CD4-positive, alpha-beta memory T cell (primary cell): ENCODE measurements at regions of chr3 and their contacts with region 1.

Region 1: DNA sequence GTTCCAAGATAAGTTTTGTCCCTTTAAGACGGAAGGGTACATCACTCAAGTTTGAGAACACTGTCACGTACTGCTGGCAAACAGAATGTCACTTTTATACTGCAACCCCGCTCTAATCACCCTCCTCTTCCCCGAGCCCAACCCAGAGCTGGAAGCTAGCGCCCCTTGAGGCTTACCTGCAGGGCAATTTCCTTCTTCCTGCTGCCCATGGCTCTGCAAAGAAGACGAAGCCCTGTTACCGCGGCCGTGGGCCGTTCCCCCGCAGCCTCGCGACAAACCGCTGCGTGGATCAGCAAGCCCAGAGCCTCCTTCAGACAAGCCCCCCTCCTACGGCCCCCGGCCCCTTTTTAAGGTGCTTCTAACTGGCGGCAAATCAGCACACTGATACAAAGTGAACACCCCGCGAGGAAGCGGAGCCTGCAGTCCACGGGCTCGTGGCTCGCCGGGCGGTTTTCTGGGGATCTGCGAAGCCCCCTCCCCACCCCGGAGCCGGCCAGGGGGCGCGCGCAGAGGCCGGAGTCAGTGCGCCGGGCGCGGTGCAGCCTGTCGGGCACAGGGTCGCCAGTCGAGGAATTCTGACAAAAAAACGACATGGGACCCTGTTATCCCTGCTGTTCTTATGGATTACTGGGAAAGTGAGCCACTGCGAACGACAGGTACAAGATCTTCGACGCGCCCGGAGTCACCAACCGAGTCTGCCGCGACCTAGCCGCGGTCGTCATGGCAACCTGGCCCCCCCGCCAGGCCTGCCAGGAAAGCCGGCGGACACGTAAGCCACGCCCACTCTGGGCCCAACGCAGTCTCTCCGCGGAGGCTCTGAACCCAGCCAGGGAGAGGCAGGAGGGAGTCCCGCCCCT is at the start of gene NME9:
- DNase-seq: peak; percentile 85 to 90 (median 89)
- H3K4me3 ChIP-seq: peak within 1 kb of the TSS; percentile 49 to 68
- H3K4me3 Mint-ChIP-seq: peak within 1 kb of the TSS; percentile 95 to 99 (median 98)
- H3K27ac ChIP-seq: peak within 1 kb of the TSS; percentile 72
- H3K27ac Mint-ChIP-seq: peak within 1 kb of the TSS; percentile 81 to 99 (median 98)
- H3K4me1 ChIP-seq: peaks cover 10% of the 10 kb centered on the region
- H3K4me1 Mint-ChIP-seq: peaks cover 17 to 41% (median 25%) of the 10 kb centered on the region in 4 donors
- H3K27me3 ChIP-seq: no peaks in the 10 kb centered on the region
- H3K27me3 Mint-ChIP-seq: no peaks in the 10 kb centered on the region
- total RNA-seq, gene NME9: 1.0 to 1.4 TPM

Region 2: GRCh38 chr3:138118612-138119422 is 210.5 kb before region 1 on chr3:
- CTCF ChIA-PET with region 1: no interaction called
- POLR2A ChIA-PET with region 1: no interaction called
- intact Hi-C with region 1: loop called (anchors 5 kb)
- DNase-seq: peak in 4 of 5 donors; percentile 25 to 37 (median 29)
- H3K4me3 ChIP-seq: no peak overlapping the region
- H3K4me3 Mint-ChIP-seq: no peak overlapping the region
- H3K27ac ChIP-seq: no peak overlapping the region
- H3K27ac Mint-ChIP-seq: no peak overlapping the region
- H3K4me1 ChIP-seq: no peaks in the 10 kb centered on the region
- H3K4me1 Mint-ChIP-seq: peaks cover 0 to 8% (median 3%) of the 10 kb centered on the region in 4 donors
- H3K27me3 ChIP-seq: peaks cover 10% of the 10 kb centered on the region
- H3K27me3 Mint-ChIP-seq: peaks cover 14 to 34% of the 10 kb centered on the region in 2 donors

Region 3: GRCh38 chr3:138180375-138181029 is 148.9 kb before region 1 on chr3:
- CTCF ChIA-PET with region 1: interaction called, 11 read pairs
- POLR2A ChIA-PET with region 1: no interaction called
- intact Hi-C with region 1: no loop called
- DNase-seq: peak; percentile 29 to 44 (median 38)
- H3K4me3 ChIP-seq: no peak overlapping the region
- H3K4me3 Mint-ChIP-seq: no peak overlapping the region
- H3K27ac ChIP-seq: no peak overlapping the region
- H3K27ac Mint-ChIP-seq: no peak overlapping the region
- H3K4me1 ChIP-seq: no peaks in the 10 kb centered on the region
- H3K4me1 Mint-ChIP-seq: no peaks in the 10 kb centered on the region
- H3K27me3 ChIP-seq: no peaks in the 10 kb centered on the region
- H3K27me3 Mint-ChIP-seq: peaks cover 0 to 3% of the 10 kb centered on the region in 2 donors

Region 4: DNA sequence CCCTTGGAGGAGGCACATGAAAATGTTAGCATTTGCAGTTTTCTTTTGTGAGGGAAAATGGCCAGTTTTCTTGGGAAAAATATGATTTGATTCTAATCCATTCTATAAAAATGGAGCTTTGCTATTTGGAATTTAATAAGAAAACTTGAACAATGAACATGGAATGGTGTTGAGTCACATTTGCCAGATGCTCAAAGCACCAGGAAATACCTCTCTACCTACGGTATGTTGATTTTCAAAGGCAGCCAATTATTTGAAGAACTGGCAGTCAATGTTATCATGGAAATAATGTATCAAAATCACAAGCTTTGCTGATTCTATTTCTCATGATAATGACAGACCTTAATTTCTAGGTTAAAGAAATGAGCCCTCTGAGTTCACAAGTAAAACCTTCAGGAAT is 14.6 kb before region 1 on chr3:
- CTCF ChIA-PET with region 1: interaction called, 10 read pairs
- POLR2A ChIA-PET with region 1: no interaction called
- intact Hi-C with region 1: no loop called
- DNase-seq: no peak
- H3K4me3 ChIP-seq: no peak overlapping the region
- H3K4me3 Mint-ChIP-seq: no peak overlapping the region
- H3K27ac ChIP-seq: no peak overlapping the region
- H3K27ac Mint-ChIP-seq: no peak overlapping the region
- H3K4me1 ChIP-seq: no peaks in the 10 kb centered on the region
- H3K4me1 Mint-ChIP-seq: no peaks in the 10 kb centered on the region
- H3K27me3 ChIP-seq: no peaks in the 10 kb centered on the region
- H3K27me3 Mint-ChIP-seq: peaks cover 0 to 2% of the 10 kb centered on the region in 2 donors

Region 5: DNA sequence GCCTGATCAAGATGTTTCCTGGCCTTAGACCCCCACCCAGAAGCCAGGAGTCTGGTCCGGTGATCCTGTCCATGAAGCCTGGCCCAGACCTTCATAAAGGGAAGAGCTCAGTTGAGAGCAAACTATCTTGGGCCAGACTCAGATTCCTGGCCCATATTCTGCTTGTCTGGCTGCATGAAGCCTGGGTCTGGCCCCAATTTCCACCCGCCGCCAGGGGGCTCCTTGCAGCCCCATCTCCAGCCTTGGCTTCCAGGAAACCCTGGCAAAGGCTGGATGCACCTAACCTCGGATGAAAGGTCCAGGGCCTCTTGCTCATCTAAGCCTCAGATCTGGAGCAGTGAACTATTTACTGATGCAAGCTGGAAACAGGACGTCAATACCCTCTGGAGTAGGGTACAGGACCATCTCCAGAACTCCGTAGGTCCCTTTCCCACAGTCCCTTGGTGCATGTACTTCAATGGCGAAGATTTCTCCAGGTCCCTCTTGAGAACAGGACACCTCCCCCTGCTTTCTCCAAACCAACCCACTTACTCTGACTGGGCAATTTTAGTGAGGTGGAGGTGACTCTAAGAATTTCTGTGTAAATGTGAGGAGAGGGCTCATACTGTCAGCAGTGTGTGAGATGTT is 612.0 kb after region 1 on chr3:
- CTCF ChIA-PET with region 1: no interaction called
- POLR2A ChIA-PET with region 1: no interaction called
- intact Hi-C with region 1: loop called (anchors 10 kb)
- DNase-seq: no peak
- H3K4me3 ChIP-seq: no peak overlapping the region
- H3K4me3 Mint-ChIP-seq: no peak overlapping the region
- H3K27ac ChIP-seq: no peak overlapping the region
- H3K27ac Mint-ChIP-seq: peak overlapping the region in 1 of 7 donors; percentile 28
- H3K4me1 ChIP-seq: peaks cover 56% of the 10 kb centered on the region
- H3K4me1 Mint-ChIP-seq: peaks cover 23 to 59% (median 40%) of the 10 kb centered on the region in 4 donors
- H3K27me3 ChIP-seq: peaks cover 82% of the 10 kb centered on the region
- H3K27me3 Mint-ChIP-seq: peaks cover 72 to 73% of the 10 kb centered on the region in 2 donors